Endothelial cell of umbilical vein (primary cell): ENCODE measurements at regions of chr1 and their contacts with region 1.

Region 1: DNA sequence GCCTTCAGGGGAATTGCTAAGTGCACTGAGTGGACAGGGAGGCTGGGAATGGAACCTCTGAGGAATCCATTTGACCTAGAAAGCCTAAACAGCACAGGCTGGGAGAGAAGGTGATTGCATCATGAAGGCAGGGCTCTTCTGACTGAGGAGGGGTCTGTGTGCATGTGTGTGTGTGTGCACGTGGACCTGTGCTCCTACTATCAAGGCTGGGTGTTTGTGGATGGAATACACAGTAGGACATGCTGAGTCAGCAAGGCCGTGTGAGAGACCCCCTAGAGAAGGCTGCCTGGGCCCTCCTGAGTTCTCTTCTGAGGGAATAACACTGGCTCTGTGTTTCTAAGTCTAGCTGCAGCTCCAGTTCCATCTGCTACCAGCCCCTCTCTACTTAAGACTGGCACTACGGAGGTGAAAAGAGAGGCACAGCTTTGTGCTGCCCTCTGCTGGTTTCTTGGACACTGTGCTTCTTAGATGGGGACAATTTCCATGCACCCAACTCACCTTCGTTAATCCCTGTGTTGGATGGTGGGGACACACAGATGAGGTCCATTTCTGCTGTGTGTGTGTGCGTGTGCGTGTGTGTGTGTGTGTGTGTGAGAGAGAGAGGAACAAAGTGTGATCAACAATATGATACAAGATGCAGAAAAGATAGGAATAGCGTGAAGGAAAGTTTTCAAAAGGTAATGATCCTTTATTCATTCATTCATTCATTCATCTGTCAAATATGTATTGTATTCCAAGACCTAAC is 6.2 kb upstream of the EFCAB14 start:
- DNase-seq: peak; percentile 82
- H3K4me3 ChIP-seq: no peak overlapping the region
- H3K27ac ChIP-seq: no peak overlapping the region
- H3K4me1 ChIP-seq: peaks cover 21% of the 10 kb centered on the region
- H3K27me3 ChIP-seq: peaks cover 15 to 16% of the 10 kb centered on the region in 2 experiments
- CTCF ChIP-seq: peak; percentile 81 to 83
- POLR2A ChIP-seq: no peak

Region 2: GRCh38 chr1:45512641-45513054 is 1212.5 kb before region 1 on chr1:
- CTCF ChIA-PET with region 1: no interaction called
- POLR2A ChIA-PET with region 1: no interaction called
- dilution Hi-C with region 1: no loop called
- intact Hi-C with region 1: no loop called
- DNase-seq: peak; percentile 74
- H3K4me3 ChIP-seq: no peak overlapping the region
- H3K27ac ChIP-seq: no peak overlapping the region
- H3K4me1 ChIP-seq: no peaks in the 10 kb centered on the region
- H3K27me3 ChIP-seq: no peaks in the 10 kb centered on the region
- CTCF ChIP-seq: peak; percentile 66 to 81
- POLR2A ChIP-seq: no peak

Region 3: DNA sequence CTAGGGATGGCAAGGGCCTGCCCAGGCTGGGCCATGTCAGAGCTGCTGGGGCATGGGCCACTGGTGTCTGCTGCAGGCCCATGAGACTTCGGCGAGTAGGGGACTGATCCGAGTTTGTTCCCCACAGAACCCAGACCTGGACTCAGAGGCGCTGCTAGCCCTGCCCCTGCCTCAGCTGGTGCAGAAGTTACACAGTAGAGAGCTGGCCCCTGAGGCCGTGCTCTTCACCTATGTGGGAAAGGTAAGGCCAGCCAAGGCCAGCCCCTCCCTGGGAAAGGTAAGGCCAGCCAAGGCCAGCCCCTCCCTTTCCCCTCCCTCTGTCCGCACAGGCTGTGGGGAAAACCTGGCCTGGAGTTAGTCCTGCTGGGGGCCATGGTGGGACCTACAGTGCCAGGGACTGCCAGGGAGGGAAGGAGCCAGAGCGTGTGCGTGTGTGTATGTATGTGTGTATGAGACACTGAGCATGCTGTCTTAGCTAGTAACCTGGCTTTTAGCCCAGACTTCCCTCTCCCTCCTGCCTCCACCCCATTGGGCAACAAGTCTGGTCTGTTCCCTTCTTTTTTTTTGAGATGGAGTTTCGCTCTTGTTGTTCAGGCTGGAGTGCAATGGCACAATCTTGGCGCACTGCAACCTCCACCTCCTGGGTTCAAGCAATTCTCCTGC is 323.1 kb before region 1 on chr1:
- CTCF ChIA-PET with region 1: interaction called, 4 read pairs
- POLR2A ChIA-PET with region 1: no interaction called
- dilution Hi-C with region 1: no loop called
- intact Hi-C with region 1: loop called (anchors 1 kb)
- DNase-seq: peak; percentile 33
- H3K4me3 ChIP-seq: no peak overlapping the region
- H3K27ac ChIP-seq: no peak overlapping the region
- H3K4me1 ChIP-seq: no peaks in the 10 kb centered on the region
- H3K27me3 ChIP-seq: peaks cover 0 to 2% of the 10 kb centered on the region in 2 experiments
- CTCF ChIP-seq: no peak
- POLR2A ChIP-seq: no peak

Region 4: GRCh38 chr1:46527474-46528296 is 197.5 kb before region 1 on chr1:
- CTCF ChIA-PET with region 1: interaction called, 34 read pairs
- POLR2A ChIA-PET with region 1: no interaction called
- dilution Hi-C with region 1: no loop called
- intact Hi-C with region 1: no loop called
- DNase-seq: peak; percentile 67
- H3K4me3 ChIP-seq: no peak overlapping the region
- H3K27ac ChIP-seq: no peak overlapping the region
- H3K4me1 ChIP-seq: no peaks in the 10 kb centered on the region
- H3K27me3 ChIP-seq: peaks cover 52 to 57% of the 10 kb centered on the region in 2 experiments
- CTCF ChIP-seq: peak; percentile 90 to 95
- POLR2A ChIP-seq: no peak

Region 5: GRCh38 chr1:46603858-46604549 is 121.2 kb before region 1 on chr1 and contains the start of gene MKNK1:
- CTCF ChIA-PET with region 1: interaction called, 13 read pairs
- POLR2A ChIA-PET with region 1: no interaction called
- dilution Hi-C with region 1: no loop called
- intact Hi-C with region 1: no loop called
- DNase-seq: peak; percentile 98
- H3K4me3 ChIP-seq: peak within 1 kb of the TSS; percentile 67 to 75 (median 69)
- H3K27ac ChIP-seq: peak within 1 kb of the TSS; percentile 19
- H3K4me1 ChIP-seq: peaks cover 13% of the 10 kb centered on the region
- H3K27me3 ChIP-seq: no peaks in the 10 kb centered on the region
- CTCF ChIP-seq: peak in 1 of 2 donors; percentile 19
- POLR2A ChIP-seq: peak; percentile 71
- total RNA-seq, gene MKNK1: 37.3 and 42.6 TPM in 2 replicates

Region 6: GRCh38 chr1:46622344-46622743 is 102.8 kb before region 1 on chr1:
- CTCF ChIA-PET with region 1: interaction called, 79 read pairs
- POLR2A ChIA-PET with region 1: interaction called, 4 read pairs
- dilution Hi-C with region 1: no loop called
- intact Hi-C with region 1: loop called (anchors 1 kb)
- DNase-seq: no peak
- H3K4me3 ChIP-seq: no peak overlapping the region
- H3K27ac ChIP-seq: no peak overlapping the region
- H3K4me1 ChIP-seq: peaks cover under 1% of the 10 kb centered on the region
- H3K27me3 ChIP-seq: no peaks in the 10 kb centered on the region
- CTCF ChIP-seq: peak; percentile 34 to 37
- POLR2A ChIP-seq: no peak

Region 7: DNA sequence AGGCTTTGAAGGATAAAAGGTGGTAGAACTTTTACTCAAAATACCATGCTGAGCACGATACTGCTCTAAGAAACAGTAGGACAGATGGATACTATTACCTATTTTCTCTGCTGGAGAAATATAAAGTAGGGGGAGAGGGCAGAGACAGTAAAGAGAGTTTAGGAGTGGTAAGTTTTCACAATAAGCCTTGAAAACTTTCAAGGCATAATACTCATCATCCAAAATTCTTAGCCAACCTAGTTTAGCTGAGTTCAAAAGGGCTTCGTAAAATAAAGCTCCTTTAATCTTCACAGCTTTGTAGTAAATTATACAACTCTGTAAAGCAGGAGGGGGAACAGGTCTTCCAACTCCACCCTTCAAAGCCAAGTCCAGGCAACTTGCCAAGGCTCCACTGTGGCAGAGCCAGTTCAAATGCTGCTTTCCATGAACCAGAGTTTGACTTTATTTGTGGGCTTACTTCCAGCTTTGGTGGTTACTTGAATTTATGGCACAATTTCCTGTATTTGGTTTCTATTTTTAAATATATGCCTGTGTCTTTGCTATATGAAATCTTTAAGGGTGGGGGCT is 38.0 kb before region 1 on chr1:
- CTCF ChIA-PET with region 1: interaction called, 6 read pairs
- POLR2A ChIA-PET with region 1: no interaction called
- dilution Hi-C with region 1: no loop called
- intact Hi-C with region 1: loop called (anchors 1 kb)
- DNase-seq: peak; percentile 80
- H3K4me3 ChIP-seq: no peak overlapping the region
- H3K27ac ChIP-seq: no peak overlapping the region
- H3K4me1 ChIP-seq: peaks cover 55% of the 10 kb centered on the region
- H3K27me3 ChIP-seq: no peaks in the 10 kb centered on the region
- CTCF ChIP-seq: no peak
- POLR2A ChIP-seq: no peak